Colonic mucosa (tissue), 4 donors: ENCODE measurements at regions of chr5 and their contacts with region 1.

Region 1: GRCh38 chr5:79020861-79021561 is 35.9 kb upstream of the ARSB start:
- DNase-seq: peak; percentile 60
- H3K4me3 ChIP-seq: no peak overlapping the region
- H3K27ac ChIP-seq: no peak overlapping the region
- H3K4me1 ChIP-seq: no peaks in the 10 kb centered on the region
- H3K27me3 ChIP-seq: no peaks in the 10 kb centered on the region
- CTCF ChIP-seq: peak; percentile 59

Region 2: DNA sequence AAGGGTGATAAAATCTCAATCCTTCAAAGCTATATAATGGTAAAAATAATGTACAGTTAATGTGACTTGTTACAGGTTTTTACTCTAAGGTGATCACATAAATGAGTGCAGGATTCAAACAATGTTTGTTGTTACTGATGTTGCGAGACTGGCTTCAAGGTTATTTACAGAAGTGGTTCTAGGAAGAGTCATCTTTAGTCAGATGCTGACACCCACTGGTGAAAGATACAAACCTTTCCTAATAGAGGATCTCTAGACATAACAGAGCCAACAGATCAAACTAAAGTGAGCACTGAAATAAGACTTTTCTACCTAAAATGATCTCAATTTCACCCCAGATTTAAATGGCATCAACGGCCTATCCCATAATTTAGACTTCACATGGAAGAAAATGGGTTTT is 56.1 kb before region 1 on chr5:
- intact Hi-C with region 1: no loop called
- DNase-seq: no peak
- H3K4me3 ChIP-seq: no peak overlapping the region
- H3K27ac ChIP-seq: no peak overlapping the region
- H3K4me1 ChIP-seq: peaks cover 3% of the 10 kb centered on the region
- H3K27me3 ChIP-seq: no peaks in the 10 kb centered on the region
- CTCF ChIP-seq: peak; percentile 47

Region 3: GRCh38 chr5:79464695-79465332 is 443.8 kb after region 1 on chr5:
- intact Hi-C with region 1: loop called (anchors 5 kb)
- DNase-seq: no peak
- H3K4me3 ChIP-seq: no peak overlapping the region
- H3K27ac ChIP-seq: no peak overlapping the region
- H3K4me1 ChIP-seq: no peaks in the 10 kb centered on the region
- H3K27me3 ChIP-seq: no peaks in the 10 kb centered on the region
- CTCF ChIP-seq: peak; percentile 65

Region 4: GRCh38 chr5:79689541-79690466 is 668.8 kb after region 1 on chr5 and contains the start of gene CMYA5:
- intact Hi-C with region 1: no loop called
- DNase-seq: peak; percentile 20
- H3K4me3 ChIP-seq: peak within 1 kb of the TSS; percentile 26
- H3K27ac ChIP-seq: no peak within 1 kb of the TSS
- H3K4me1 ChIP-seq: no peaks in the 10 kb centered on the region
- H3K27me3 ChIP-seq: no peaks in the 10 kb centered on the region
- CTCF ChIP-seq: no peak
- total RNA-seq, gene CMYA5: 0.30 to 0.66 TPM